PC-9 (cell line): ENCODE measurements at regions of chr13 and their contacts with region 1.

Region 1: GRCh38 chr13:40452741-40453667 is 213.4 kb downstream of the FOXO1 start:
- DNase-seq: peak; percentile 65 to 83
- H3K4me3 ChIP-seq: no peak overlapping the region
- H3K27ac ChIP-seq: peak overlapping the region; percentile 92
- H3K4me1 ChIP-seq: peaks cover 30% of the 10 kb centered on the region
- H3K27me3 ChIP-seq: no peaks in the 10 kb centered on the region
- CTCF ChIP-seq: no peak

Region 2: GRCh38 chr13:40069173-40070044 is 383.6 kb before region 1 on chr13:
- CTCF ChIA-PET with region 1: no interaction called
- POLR2A ChIA-PET with region 1: no interaction called
- intact Hi-C with region 1: loop called (anchors 2 kb)
- DNase-seq: peak in 1 of 2 experiments; percentile 47
- H3K4me3 ChIP-seq: no peak overlapping the region
- H3K27ac ChIP-seq: no peak overlapping the region
- H3K4me1 ChIP-seq: no peaks in the 10 kb centered on the region
- H3K27me3 ChIP-seq: no peaks in the 10 kb centered on the region
- CTCF ChIP-seq: peak; percentile 77

Region 3: DNA sequence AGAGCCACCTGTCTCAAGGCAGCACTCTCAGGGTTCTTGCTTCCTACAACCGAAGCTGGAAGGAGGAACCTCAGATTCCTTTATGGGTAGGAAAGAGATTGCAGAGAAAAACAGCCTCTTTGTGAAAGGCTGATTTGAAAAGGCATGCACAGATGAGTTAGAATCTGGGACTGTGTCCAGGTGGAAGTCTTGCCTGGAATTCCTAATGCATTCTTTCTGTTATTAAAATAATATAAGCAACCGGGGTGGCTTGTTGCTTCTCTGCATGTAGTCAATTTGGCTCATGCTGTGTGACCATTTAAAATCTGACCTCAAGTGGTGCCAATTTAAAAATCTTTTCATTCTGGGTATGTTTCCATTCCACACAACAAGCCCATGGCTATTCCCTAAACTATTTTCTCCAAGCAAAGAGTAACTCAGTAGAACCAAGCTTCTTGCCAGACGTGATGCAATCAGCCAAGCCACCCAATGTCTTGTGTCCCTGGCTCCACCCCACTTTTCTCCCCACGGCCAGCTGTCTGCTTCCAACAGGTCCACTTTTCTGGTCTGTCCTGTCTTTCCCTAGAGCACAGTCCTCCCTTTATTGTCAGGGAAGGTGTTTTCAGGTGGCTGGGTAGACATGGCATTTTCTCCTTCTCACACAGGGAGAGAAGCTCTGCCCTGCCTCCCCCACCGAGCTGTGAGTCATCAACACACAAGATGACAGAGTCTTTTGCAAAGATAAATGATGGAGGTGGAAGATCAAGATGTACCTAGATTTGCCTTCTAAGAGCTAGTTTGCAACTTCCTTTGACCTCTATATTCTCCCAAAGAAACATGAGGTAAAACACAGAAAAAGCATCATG is 180.9 kb before region 1 on chr13:
- CTCF ChIA-PET with region 1: no interaction called
- POLR2A ChIA-PET with region 1: no interaction called
- intact Hi-C with region 1: loop called (anchors 1 kb)
- DNase-seq: peak; percentile 74 to 82
- H3K4me3 ChIP-seq: no peak overlapping the region
- H3K27ac ChIP-seq: peak overlapping the region; percentile 57
- H3K4me1 ChIP-seq: peaks cover 27% of the 10 kb centered on the region
- H3K27me3 ChIP-seq: no peaks in the 10 kb centered on the region
- CTCF ChIP-seq: no peak

Region 4: DNA sequence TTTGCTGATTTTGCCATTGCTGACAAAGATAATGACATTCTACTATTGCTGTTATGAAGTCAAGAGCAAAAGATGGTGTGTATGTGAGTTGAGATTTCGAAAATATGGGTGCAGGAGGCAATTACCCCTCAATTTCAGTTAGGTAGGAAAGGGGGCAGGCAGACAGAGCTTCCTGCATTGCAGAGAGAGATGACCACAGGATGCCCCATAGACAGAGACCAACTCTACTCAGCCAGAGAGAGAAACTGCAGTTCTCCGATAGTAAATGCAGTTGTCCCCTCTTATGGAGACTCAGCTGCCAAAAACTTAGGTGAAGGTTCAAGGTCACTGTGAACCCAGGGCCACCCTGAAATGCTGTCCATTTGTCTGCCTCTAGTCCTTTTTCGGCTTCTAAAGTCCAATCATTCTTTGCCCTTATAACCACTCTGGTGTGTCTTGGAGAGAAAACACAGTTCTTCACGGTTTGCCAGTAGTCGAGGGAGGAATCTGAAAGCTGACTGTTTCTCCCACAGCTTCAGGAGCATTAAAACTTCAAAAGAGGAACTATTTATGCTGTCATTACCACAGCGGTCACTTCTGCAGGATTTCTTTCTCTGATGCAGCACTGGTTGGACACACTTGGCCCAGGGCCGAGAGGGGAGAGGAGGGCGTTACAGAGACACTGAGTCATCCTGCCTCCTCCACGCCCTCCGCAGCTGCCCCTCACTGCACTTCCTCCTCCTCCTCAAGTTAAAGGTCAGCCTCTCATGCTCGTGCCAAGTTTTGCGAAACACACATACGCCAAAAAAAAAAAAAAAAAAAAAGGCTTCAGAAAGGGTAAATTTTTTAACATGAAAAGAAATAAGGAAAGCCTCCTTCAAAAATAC is 50.9 kb before region 1 on chr13:
- CTCF ChIA-PET with region 1: no interaction called
- POLR2A ChIA-PET with region 1: no interaction called
- intact Hi-C with region 1: loop called (anchors 1 kb)
- DNase-seq: peak; percentile 88 to 91
- H3K4me3 ChIP-seq: peak overlapping the region; percentile 21; the same call in 1 of the 2 replicates
- H3K27ac ChIP-seq: peak overlapping the region; percentile 71
- H3K4me1 ChIP-seq: peaks cover 62% of the 10 kb centered on the region
- H3K27me3 ChIP-seq: no peaks in the 10 kb centered on the region
- CTCF ChIP-seq: no peak

Region 5: DNA sequence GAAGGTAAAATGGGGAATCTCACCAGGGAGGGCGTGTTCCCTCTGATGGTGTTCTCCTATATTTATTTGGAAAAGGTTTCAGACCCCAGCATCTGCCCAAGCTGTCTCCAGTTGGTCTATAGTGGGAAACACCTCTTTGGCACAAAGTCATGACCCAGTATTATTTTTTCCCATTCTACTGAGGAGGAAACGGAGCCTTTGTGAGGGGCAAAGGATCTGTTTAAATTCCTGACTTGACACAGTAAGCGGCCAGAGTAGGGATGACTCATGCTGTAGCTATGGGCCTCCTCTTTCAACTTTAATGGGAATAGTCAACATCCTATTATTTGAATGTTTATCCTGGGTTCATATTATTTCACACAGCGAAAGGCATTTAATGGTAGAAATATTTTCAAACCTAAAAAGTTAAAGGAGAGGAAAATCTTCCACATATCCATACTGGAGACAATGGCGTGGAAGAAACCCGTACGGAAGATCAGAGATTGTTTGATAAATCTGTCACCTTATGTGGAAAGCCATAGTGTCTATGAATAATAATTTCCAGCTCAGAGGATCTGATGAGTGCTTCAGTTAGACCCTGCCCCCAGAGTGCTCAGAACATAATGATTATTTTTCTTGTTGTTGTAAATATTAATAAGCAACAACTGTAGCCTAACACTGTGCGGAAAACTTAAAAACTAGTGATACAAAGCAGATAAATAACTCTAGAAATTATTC is 87.5 kb after region 1 on chr13:
- CTCF ChIA-PET with region 1: no interaction called
- POLR2A ChIA-PET with region 1: no interaction called
- intact Hi-C with region 1: loop called (anchors 5 kb)
- DNase-seq: peak; percentile 46 to 76
- H3K4me3 ChIP-seq: no peak overlapping the region; the same call in 1 of the 2 replicates
- H3K27ac ChIP-seq: peak overlapping the region; percentile 79
- H3K4me1 ChIP-seq: peaks cover 18% of the 10 kb centered on the region
- H3K27me3 ChIP-seq: no peaks in the 10 kb centered on the region
- CTCF ChIP-seq: no peak